ENCODE measurements at regions of chr1 and their contacts with region 1.

Region 1: GRCh38 chr1:109620841-109621286 is 1.2 kb downstream of the AMPD2 start:
- DNase-seq: peak; percentile 97
- CTCF ChIP-seq: no peak

Region 2: GRCh38 chr1:108746372-108747205 is 874.3 kb before region 1 on chr1 and contains the start of gene STXBP3:
- in situ Hi-C with region 1: no loop called
- DNase-seq: peak; percentile 98
- CTCF ChIP-seq: peak; percentile 98

Region 3: GRCh38 chr1:109438798-109439297 is 182.0 kb before region 1 on chr1:
- in situ Hi-C with region 1: no loop called
- DNase-seq: peak; percentile 49
- CTCF ChIP-seq: no peak

Region 4: DNA sequence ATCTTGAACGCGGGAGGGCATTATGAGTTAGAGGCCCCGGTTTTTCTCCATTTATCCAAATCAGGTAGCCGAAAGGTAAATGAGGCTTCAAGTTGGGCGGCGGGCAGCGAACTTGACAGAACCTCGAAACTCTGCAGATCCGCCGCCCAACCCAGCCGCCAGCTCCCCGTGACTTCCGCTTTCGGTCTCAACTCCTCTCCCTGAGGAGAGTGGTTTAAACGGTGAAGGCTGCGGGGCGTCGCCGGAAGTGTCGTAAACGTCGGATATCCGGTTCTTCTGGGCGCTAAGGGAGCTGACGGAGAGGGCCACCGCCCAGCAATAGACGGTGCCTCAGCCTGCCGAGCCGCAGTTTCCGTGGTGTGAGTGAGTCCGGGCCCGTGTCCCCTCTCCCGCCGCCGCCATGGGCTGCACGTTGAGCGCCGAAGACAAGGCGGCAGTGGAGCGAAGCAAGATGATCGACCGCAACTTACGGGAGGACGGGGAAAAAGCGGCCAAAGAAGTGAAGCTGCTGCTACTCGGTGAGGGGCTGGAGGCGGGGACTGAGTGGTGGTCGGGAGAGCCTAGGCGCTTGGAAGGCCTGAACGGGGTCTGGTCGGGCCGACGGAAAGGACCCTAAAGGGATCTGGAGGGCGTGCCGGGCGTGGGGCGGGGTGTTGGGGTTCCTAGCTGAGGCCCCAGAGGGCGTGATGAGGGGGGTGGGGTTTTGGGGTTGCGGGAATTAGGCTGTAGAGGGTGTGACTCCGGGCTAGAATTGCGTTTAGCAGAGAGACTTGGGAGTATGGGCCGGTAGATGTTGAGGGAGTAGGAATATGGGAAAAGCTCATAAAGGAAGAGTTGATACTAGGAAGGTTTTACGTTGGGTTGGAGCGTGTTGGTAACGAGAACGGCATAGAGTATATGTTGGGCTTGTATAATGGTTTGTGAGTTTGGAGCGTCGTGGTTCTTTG is 72.3 kb before region 1 on chr1 and contains the start of gene GNAI3:
- in situ Hi-C with region 1: loop called (anchors 5 kb)
- DNase-seq: peak; percentile 94
- CTCF ChIP-seq: no peak

Measured in GM13976 (cell line).